ENCODE measurements at regions of chr2 and their contacts with region 1.

Region 1: DNA sequence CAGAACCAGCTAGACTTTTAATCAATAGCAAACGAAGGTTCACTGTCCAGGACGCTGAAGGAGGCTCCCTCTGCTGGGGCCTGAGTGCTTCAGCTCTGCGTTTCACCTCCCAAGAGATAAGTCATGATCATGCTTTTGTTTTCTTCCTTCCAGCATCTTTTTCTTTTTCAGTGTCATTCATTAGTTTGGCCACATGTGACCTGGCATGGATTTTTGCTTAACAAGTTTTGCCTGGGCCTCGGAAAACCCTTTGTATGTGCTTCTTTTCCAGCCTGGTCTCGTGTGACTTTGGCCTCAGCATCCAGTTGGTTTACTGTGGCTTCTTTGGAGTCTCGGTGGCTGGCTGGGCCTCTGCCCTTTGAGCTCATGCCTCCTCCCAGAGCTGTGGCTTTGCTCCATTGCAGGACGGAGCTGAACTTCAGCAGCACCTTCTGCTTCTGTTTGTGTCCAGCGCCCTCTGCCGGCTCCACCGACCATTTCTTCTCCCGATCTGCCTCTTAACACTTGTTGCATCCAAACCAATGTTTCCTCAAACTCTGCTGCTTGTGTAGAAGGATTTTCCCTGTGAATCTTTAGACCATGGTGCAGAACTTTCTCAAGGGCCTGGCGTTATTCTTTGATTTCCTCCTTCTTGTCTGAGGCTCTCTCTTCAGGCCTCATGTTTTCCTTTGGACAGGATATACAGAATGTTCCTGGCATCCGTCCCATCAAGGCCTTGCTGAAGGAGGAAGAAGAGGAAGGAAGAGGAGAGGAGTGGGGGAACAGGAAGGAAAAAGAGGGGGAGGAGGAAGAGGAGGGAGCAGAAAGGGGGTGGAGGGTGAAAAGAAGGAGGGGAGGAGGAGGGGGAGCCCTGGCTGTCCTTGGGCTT is 23.6 kb upstream of the HES6 start:
- DNase-seq: peak; percentile 93
- H3K4me3 ChIP-seq: no peak overlapping the region
- H3K27ac ChIP-seq: peak overlapping the region in 7 of 8 donors; percentile 11 to 71 (median 62)
- H3K4me1 ChIP-seq: peaks cover 8 to 48% (median 28%) of the 10 kb centered on the region in 6 donors
- H3K27me3 ChIP-seq: no peaks in the 10 kb centered on the region
- CTCF ChIP-seq: peak; percentile 62 to 90 (median 83)
- POLR2A ChIP-seq: no peak

Region 2: GRCh38 chr2:237858294-237859081 is 404.9 kb before region 1 on chr2:
- intact Hi-C with region 1: loop called (anchors 2 kb)
- DNase-seq: peak; percentile 78
- H3K4me3 ChIP-seq: peak overlapping the region in 1 of 8 donors; percentile 66
- H3K27ac ChIP-seq: no peak overlapping the region
- H3K4me1 ChIP-seq: peaks cover 0 to 27% (median 17%) of the 10 kb centered on the region in 6 donors
- H3K27me3 ChIP-seq: peaks cover 0 to 54% (median 11%) of the 10 kb centered on the region in 7 donors
- CTCF ChIP-seq: peak; percentile 22 to 76 (median 61)
- POLR2A ChIP-seq: no peak

Region 3: DNA sequence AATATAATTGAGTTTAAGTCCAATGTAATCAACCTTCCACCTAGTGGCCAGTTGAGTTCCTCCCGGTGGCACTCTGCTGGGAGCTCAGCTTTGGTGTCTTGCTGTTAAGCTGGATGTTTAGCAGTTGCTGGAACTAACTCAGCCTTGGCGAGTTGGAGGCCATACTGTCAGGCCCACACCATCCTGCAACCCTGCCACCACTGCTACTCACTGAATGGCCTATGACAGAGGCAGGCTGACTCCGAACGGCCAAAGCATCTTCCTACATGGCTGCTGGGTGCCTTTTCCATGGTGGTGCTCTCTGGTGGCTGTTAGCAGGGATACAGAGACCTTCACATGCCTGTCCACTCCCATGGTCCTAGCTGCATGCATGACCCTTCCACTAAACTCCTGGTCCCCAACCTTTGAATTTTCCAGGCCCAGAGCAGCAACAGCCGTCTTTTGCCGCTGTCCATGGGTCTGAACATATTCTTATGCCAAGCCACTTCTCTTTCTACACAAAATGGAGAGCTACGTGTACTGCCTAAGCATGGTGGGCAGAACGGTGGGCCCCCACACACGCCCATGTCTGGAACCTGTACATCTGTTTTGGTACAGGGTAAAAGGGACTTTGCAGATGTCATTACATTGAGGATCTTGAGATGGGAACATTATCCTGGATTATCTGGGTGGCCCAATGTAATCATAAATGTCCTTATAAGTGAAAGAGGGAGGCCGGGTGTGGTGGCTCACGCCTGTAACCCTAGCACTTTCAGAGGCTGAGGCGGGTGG is 41.8 kb after region 1 on chr2:
- intact Hi-C with region 1: no loop called
- DNase-seq: no peak
- H3K4me3 ChIP-seq: no peak overlapping the region
- H3K27ac ChIP-seq: no peak overlapping the region
- H3K4me1 ChIP-seq: no peaks in the 10 kb centered on the region
- H3K27me3 ChIP-seq: peaks cover 0 to 6% (median 0%) of the 10 kb centered on the region in 7 donors
- CTCF ChIP-seq: no peak
- POLR2A ChIP-seq: no peak

Region 4: DNA sequence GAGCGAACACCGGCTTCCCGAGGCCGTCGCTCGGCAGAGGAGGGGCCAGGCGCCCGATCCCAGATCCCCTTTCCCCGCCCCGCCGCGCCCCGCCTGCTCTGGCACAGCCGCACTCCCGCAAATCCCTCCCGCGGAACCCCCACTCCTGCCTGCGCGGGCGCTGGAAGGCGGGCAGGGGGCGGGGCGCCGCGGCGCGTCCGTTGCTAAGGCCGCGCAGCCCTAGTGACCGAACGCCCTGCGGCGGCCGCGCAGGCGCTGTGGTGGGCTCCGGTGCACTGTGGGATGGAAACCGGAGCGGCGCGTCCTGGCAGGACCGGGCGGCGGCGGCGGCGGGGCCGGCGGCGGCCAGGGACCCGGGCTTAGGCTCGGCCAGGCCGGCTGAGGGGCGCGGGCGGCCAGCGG is 56.8 kb after region 1 on chr2 and contains the start of gene TRAF3IP1:
- intact Hi-C with region 1: no loop called
- DNase-seq: peak; percentile 96
- H3K4me3 ChIP-seq: peak within 1 kb of the TSS; percentile 68 to 97 (median 83)
- H3K27ac ChIP-seq: peak within 1 kb of the TSS in 4 of 8 donors; percentile 38 to 57 (median 41)
- H3K4me1 ChIP-seq: peaks cover 11 to 28% (median 21%) of the 10 kb centered on the region in 6 donors
- H3K27me3 ChIP-seq: peaks cover 0 to 4% (median 0%) of the 10 kb centered on the region in 7 donors
- CTCF ChIP-seq: no peak
- POLR2A ChIP-seq: no peak
- total RNA-seq, gene TRAF3IP1: 7.8 to 19.2 (median 10.8) TPM

Region 5: GRCh38 chr2:238449909-238450417 is 186.5 kb after region 1 on chr2:
- intact Hi-C with region 1: no loop called
- DNase-seq: peak; percentile 77
- H3K4me3 ChIP-seq: no peak overlapping the region
- H3K27ac ChIP-seq: peak overlapping the region in 5 of 8 donors; percentile 0 to 34 (median 9)
- H3K4me1 ChIP-seq: peaks cover 0 to 29% (median 19%) of the 10 kb centered on the region in 6 donors
- H3K27me3 ChIP-seq: no peaks in the 10 kb centered on the region
- CTCF ChIP-seq: no peak
- POLR2A ChIP-seq: no peak

Measured in spleen (tissue), 13 donors.